ENCODE measurements at regions of chr15 and their contacts with region 1.

Region 1: DNA sequence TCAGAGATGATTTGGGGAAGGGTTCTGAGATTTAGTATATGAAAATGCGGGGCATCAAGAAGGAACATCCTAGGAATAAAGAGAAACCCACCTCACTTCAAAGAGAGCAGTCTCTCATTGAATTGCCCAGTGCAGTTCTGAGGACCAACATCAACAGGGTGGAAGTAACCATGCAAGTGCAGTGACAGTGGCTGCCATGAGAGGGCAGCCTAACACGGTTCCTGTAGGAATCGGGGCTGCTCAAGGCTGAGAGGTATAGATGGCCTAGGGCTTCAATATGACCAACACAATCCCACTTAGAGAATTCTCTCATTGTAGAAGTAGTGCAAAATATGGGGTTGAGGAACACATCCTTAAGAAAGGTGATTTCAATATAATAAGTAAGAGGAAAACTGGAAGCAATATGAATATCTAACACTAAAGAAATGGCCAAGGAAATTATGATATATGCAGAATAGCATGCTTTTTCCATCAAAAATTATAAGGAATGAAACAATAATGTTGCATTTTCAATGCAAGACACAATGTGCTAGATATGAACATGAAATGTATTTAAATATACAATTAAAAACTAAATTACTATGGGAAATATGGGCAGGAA is 51.1 kb upstream of the ARRDC4 start:
- DNase-seq: peak; percentile 62 to 83 (median 74)
- H3K4me3 ChIP-seq: no peak overlapping the region
- H3K27ac ChIP-seq: no peak overlapping the region
- H3K4me1 ChIP-seq: peaks cover 0 to 13% (median under 1%) of the 10 kb centered on the region in 4 experiments
- H3K27me3 ChIP-seq: peaks cover 0 to 8% (median 5%) of the 10 kb centered on the region in 5 experiments

Region 2: GRCh38 chr15:97884513-97885131 is 24.8 kb before region 1 on chr15:
- CTCF ChIA-PET with region 1: no interaction called
- POLR2A ChIA-PET with region 1: no interaction called
- DNase-seq: no peak
- H3K4me3 ChIP-seq: no peak overlapping the region
- H3K27ac ChIP-seq: no peak overlapping the region
- H3K4me1 ChIP-seq: no peaks in the 10 kb centered on the region
- H3K27me3 ChIP-seq: peaks cover 2 to 20% (median 3%) of the 10 kb centered on the region in 5 experiments

Region 3: DNA sequence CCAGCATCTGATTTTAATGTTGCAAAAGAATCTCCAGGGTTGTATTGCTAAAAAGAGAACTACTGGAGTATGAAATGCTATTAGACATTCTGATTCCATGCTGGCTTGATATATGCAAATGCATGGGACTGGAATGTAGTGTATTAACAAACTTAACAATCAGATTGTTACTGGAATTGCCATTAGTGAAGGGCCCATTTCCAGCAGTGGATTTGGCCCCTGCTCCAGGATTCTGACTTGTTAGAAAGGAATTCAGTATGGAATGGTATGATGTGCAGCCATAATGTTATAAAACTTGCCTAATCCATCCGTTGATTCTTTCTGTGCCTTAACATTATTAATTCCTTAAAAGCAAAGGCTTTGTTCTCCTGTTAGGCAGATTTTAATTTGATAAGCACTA is 59.0 kb after region 1 on chr15:
- CTCF ChIA-PET with region 1: interaction called, 10 read pairs
- POLR2A ChIA-PET with region 1: no interaction called
- DNase-seq: no peak
- H3K4me3 ChIP-seq: no peak overlapping the region
- H3K27ac ChIP-seq: no peak overlapping the region
- H3K4me1 ChIP-seq: peaks cover 0 to 26% (median 15%) of the 10 kb centered on the region in 4 experiments
- H3K27me3 ChIP-seq: no peaks in the 10 kb centered on the region

Region 4: GRCh38 chr15:98169551-98169950 is 260.2 kb after region 1 on chr15:
- CTCF ChIA-PET with region 1: interaction called, 112 read pairs
- POLR2A ChIA-PET with region 1: no interaction called
- DNase-seq: peak in 2 of 3 donors; percentile 48 to 80
- H3K4me3 ChIP-seq: no peak overlapping the region
- H3K27ac ChIP-seq: no peak overlapping the region
- H3K4me1 ChIP-seq: peaks cover 0 to 5% (median 2%) of the 10 kb centered on the region in 4 experiments
- H3K27me3 ChIP-seq: no peaks in the 10 kb centered on the region

Region 5: GRCh38 chr15:98177924-98178592 is 268.7 kb after region 1 on chr15:
- CTCF ChIA-PET with region 1: interaction called, 112 read pairs
- POLR2A ChIA-PET with region 1: no interaction called
- DNase-seq: peak; percentile 80 to 83 (median 81)
- H3K4me3 ChIP-seq: no peak overlapping the region
- H3K27ac ChIP-seq: no peak overlapping the region
- H3K4me1 ChIP-seq: peaks cover 0 to 8% (median 0%) of the 10 kb centered on the region in 4 experiments
- H3K27me3 ChIP-seq: peaks cover 0 to 22% (median 8%) of the 10 kb centered on the region in 5 experiments